ENCODE measurements at regions of chr5 and their contacts with region 1.

Region 1: DNA sequence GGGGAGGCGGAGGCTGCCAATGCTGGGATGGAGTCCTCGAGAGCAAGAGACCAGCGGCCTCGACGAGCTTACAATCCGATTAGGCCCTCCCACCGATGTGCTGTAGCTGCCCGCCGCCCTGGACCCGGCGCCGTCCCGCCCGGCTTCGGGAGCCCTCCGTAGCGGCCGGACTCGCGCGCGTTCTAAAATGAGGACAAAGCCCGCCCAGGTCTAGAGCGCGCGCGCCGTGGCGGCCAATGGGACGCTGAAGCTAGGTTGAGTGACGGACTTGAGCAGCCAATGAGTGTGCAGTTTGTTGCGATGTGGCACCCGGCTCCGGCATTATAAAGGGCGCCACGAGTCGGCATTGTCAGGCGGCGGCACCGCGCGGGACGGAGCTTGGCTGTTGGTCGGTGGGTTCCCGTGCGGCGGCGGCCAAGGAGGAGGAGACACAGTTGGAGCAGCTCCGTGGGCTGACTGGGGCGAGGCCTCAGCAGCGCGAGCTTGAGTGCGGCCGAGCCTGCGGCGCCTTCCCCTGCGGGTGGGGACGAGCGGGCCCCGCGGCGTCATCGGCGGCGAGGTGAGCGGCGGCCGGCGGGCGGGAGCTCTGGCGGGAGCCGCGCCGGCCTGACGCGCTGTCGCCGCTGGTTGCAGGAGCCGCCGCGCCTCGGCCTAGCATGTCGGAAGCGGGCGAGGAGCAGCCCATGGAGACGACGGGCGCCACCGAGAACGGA is at the start of gene HNRNPAB:
- DNase-seq: peak; percentile 97
- ATAC-seq: peak; percentile 84
- H3K4me3 Mint-ChIP-seq: peak within 1 kb of the TSS; percentile 82
- H3K27ac Mint-ChIP-seq: peak within 1 kb of the TSS; percentile 97
- H3K4me1 Mint-ChIP-seq: peaks cover 30% of the 10 kb centered on the region
- H3K27me3 Mint-ChIP-seq: no peaks in the 10 kb centered on the region
- total RNA-seq, gene HNRNPAB: 258 to 336 TPM

Region 2: GRCh38 chr5:177006265-177006972 is 1197.9 kb before region 1 on chr5 and contains the start of gene UIMC1:
- CTCF ChIA-PET with region 1: no interaction called
- POLR2A ChIA-PET with region 1: no interaction called
- intact Hi-C with region 1: loop called in 1 of 2 experiments (anchors 5 kb)
- DNase-seq: peak; percentile 96
- ATAC-seq: peak; percentile 90
- H3K4me3 Mint-ChIP-seq: peak within 1 kb of the TSS; percentile 87
- H3K27ac Mint-ChIP-seq: peak within 1 kb of the TSS; percentile 96
- H3K4me1 Mint-ChIP-seq: peaks cover 26% of the 10 kb centered on the region
- H3K27me3 Mint-ChIP-seq: no peaks in the 10 kb centered on the region
- total RNA-seq, gene UIMC1: 50.4 to 53.4 TPM

Region 3: DNA sequence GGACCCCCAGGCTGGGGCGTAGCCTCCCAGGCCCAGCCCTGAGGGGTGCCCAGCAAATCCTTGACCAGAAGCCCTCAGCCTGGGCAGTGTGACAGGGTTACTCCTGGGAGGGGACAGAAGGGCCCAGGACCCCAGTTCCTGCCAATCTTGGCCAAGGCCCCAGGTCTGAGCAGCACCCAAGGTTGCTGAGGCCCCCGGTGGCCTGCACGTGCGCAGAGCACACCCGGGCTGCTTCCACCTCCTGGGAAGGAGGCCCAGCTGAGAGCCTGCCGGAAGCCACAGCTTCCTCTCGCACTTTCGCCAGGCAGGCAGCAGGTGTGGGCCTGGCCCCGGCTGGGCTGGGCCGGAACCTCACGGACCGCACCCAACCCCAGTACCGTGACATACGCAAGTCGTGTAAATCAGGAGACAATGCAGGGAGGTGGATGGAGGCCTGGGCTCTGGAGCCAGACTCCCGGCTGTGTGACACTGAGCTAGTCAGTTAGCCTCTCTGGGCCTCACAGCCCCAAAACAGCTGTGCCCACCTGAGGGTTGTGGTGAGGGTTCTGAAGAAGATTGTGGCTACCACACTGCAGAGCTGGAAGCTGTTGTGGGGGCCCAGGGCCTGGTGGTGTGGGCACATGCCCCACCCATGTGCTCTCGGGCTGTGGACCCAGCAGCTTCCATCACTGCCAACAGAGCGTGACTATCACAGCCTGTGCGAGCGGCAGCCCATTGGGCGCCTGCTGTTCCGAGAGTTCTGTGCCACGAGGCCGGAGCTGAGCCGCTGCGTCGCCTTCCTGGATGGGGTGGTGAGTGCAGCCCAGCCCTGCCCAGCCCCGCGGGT is 772.8 kb before region 1 on chr5:
- CTCF ChIA-PET with region 1: no interaction called
- POLR2A ChIA-PET with region 1: no interaction called
- intact Hi-C with region 1: loop called in 1 of 2 experiments (anchors 5 kb)
- DNase-seq: peak; percentile 81
- ATAC-seq: peak; percentile 19
- H3K4me3 Mint-ChIP-seq: peak overlapping the region; percentile 88
- H3K27ac Mint-ChIP-seq: peak overlapping the region; percentile 94
- H3K4me1 Mint-ChIP-seq: peaks cover 73% of the 10 kb centered on the region
- H3K27me3 Mint-ChIP-seq: no peaks in the 10 kb centered on the region

Region 4: DNA sequence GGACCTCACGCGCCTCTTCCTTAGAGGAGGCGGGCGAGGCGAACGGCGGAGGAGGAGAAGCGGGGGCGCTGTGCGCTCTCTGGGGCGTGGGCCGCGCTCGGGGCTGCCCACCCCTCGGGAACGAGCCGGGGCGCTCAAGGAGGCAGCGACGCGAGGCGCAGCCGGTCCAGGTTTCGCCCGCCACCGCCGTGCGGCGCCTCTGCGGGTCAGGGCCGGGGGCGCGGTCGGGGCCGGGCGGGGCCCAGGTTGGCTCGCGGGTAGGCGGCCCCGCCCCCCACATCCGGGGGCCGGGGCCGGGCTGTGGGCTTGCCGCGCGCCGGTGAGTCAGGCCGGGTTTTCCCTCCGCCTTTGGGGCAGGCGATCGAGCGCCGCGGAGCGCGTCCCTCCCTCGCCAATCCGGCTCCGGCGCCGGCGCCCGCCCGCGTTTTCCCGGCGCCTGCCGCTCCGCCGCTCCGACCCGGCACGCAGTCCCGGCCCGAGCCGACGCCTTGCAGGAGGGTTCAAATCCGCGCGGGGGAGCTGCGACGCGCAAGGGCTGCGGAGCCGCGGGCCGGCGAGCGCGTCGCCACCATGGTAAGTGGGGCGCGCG is 91.0 kb before region 1 on chr5 and contains the start of gene N4BP3:
- CTCF ChIA-PET with region 1: no interaction called
- POLR2A ChIA-PET with region 1: interaction called, 3 read pairs
- intact Hi-C with region 1: loop called in 1 of 2 experiments (anchors 1 kb)
- DNase-seq: peak; percentile 92
- ATAC-seq: peak; percentile 83
- H3K4me3 Mint-ChIP-seq: peak within 1 kb of the TSS; percentile 88
- H3K27ac Mint-ChIP-seq: peak within 1 kb of the TSS; percentile 73
- H3K4me1 Mint-ChIP-seq: peaks cover 36% of the 10 kb centered on the region
- H3K27me3 Mint-ChIP-seq: peaks cover 6% of the 10 kb centered on the region
- total RNA-seq, gene N4BP3: 3.3 to 3.7 TPM

Region 5: DNA sequence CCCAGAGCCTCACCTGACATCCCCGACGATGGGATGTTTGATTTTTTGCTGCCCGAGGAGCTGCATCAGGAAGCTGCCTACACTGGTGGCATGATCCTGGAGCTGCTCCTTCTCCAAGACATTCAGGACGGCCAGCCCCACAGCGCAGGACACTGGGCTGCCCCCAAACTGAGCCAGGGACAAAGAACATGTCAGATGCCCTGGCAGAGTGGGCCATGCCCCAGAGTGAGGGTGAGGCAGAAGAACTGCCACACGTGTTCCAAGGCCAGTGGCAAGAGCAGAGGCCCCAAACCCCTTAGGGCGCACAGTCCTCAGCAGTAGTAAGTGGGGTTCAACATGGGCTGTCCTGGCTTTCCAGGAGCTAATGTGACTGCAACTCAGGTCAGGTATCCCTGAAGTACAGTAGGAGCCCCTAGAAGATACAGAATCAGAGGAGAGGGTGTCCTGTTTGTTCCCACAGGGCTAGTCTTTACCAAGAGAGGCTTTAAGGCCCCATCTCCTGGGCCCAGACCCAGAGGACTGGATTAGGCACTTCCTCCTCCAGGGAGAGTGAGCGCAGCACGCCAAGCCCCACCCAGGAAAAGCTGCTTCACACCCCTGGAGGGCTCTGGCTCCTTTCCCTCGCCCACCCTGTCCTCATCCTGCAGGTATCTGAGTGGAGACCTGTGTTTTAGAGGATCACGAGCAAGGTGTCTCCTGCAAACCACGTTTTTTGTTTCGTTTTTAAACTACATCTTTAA is 11.1 kb after region 1 on chr5:
- CTCF ChIA-PET with region 1: interaction called, 9 read pairs
- POLR2A ChIA-PET with region 1: interaction called, 14 read pairs
- intact Hi-C with region 1: no loop called
- DNase-seq: no peak
- ATAC-seq: no peak
- H3K4me3 Mint-ChIP-seq: no peak overlapping the region
- H3K27ac Mint-ChIP-seq: no peak overlapping the region
- H3K4me1 Mint-ChIP-seq: no peaks in the 10 kb centered on the region
- H3K27me3 Mint-ChIP-seq: no peaks in the 10 kb centered on the region

Region 6: DNA sequence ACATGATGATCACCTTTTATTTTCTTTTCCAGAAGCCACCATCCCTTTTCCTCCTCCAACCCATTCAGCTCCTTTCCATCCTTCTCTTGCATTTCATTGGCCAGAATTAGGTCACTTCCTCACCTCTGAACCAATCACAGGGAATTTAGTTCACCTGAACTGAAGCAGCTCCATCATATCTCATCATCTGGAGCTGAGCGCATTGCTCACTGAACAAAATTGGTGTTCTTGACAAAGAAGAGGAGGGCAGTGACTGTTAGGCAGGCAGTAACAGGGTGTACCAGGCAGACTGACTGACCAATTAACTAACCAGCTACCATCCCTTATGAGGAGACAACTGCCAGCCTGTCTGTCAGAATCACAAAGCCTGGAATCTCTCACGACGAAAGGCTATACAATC is 527.9 kb after region 1 on chr5:
- CTCF ChIA-PET with region 1: no interaction called
- POLR2A ChIA-PET with region 1: no interaction called
- intact Hi-C with region 1: loop called in 1 of 2 experiments (anchors 1 kb)
- DNase-seq: no peak
- ATAC-seq: no peak
- H3K4me3 Mint-ChIP-seq: no peak overlapping the region
- H3K27ac Mint-ChIP-seq: no peak overlapping the region
- H3K4me1 Mint-ChIP-seq: peaks cover 10% of the 10 kb centered on the region
- H3K27me3 Mint-ChIP-seq: no peaks in the 10 kb centered on the region